ENCODE measurements at regions of chr11 and their contacts with region 1.

Region 1: GRCh38 chr11:62542750-62543567 is 3.6 kb downstream of the AHNAK start:
- DNase-seq: peak; percentile 91 to 94
- ATAC-seq: peak; percentile 77
- H3K4me3 ChIP-seq: peak overlapping the region; percentile 86 to 98
- H3K27ac ChIP-seq: peak overlapping the region in 1 of 2 donors; percentile 46
- H3K4me1 ChIP-seq: peaks cover 0 to 4% of the 10 kb centered on the region in 2 donors
- H3K27me3 ChIP-seq: no peaks in the 10 kb centered on the region

Region 2: GRCh38 chr11:62394825-62395538 is 148.0 kb before region 1 on chr11:
- intact Hi-C with region 1: loop called in 1 of 2 experiments (anchors 2 kb)
- DNase-seq: peak; percentile 91 to 93
- ATAC-seq: peak; percentile 86
- H3K4me3 ChIP-seq: no peak overlapping the region
- H3K27ac ChIP-seq: peak overlapping the region in 1 of 2 donors; percentile 60
- H3K4me1 ChIP-seq: peaks cover 0 to 5% of the 10 kb centered on the region in 2 donors
- H3K27me3 ChIP-seq: no peaks in the 10 kb centered on the region

Region 3: DNA sequence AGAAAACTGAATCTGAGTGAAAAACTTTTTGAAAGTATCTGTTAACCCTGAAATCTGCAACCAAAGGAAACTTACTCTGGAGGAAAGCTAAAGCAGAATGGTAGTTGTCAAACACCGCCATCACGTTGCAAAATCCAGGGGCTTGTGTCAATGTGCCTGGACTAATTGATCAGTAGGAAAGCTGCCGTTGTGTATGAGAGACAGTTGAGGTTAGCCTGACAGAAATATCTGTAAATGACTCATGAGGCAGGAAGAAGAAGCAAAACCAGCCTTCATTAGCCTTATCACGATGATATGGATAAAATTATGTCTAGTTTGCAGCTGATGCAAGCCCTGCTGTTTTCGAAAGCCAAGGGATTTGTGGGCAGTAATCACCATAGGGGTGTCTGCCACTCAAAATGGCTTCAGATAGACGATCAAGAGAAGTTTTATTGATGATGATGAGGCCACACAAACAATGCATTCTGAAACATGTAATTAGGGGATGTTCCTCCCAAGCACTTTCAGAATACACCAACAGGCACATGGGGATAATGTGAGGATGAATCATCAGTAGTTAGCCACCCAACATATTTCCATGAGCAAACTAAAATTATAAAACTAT is 115.2 kb before region 1 on chr11:
- intact Hi-C with region 1: loop called (anchors 1 to 2 kb)
- DNase-seq: no peak
- ATAC-seq: no peak
- H3K4me3 ChIP-seq: no peak overlapping the region
- H3K27ac ChIP-seq: no peak overlapping the region
- H3K4me1 ChIP-seq: no peaks in the 10 kb centered on the region
- H3K27me3 ChIP-seq: no peaks in the 10 kb centered on the region

Region 4: GRCh38 chr11:62444236-62444833 is 98.6 kb before region 1 on chr11:
- intact Hi-C with region 1: loop called in 1 of 2 experiments (anchors 5 kb)
- DNase-seq: peak; percentile 87 to 92
- ATAC-seq: peak; percentile 72
- H3K4me3 ChIP-seq: peak overlapping the region; percentile 1 to 22
- H3K27ac ChIP-seq: peak overlapping the region; percentile 65 to 76
- H3K4me1 ChIP-seq: no peaks in the 10 kb centered on the region
- H3K27me3 ChIP-seq: no peaks in the 10 kb centered on the region

Region 5: DNA sequence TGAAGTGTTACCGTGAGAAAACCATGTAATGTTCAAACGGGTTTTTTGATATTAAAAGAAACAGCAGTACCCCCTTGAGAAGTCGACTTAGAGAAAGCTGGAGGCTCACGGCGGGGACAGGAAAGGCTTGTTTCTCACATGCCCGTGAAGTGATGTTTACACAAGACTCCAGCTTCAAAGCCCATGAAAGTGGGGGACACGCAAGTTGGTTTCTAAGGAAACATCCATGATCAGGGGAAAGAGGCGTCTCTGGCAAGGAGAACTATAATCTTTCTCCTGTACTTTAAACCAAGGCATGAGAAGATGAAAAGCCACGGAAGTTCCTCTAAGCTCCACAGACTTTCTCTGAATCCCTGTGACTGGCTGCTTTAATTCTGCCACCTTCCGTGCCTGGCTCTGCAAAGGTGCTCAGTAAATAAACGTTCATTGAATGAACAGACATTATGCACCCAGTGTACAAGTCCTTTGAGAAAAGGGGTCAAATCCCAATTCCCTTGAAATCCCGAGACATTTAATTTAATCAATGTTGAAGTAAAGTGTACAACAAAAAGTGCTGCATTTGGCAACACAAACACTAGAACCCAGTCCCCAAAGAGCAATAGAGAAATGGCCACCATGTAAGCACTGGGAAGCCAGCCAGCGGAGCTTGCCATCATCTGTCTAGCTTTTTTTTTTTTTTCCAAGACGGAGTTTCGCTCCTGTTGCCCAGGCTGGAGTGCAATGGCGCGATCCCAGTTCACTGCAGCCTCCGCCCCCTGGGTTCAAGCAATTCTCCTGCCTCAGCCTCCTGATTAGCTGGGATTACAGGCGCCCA is 55.0 kb before region 1 on chr11:
- intact Hi-C with region 1: no loop called
- DNase-seq: no peak
- ATAC-seq: no peak
- H3K4me3 ChIP-seq: no peak overlapping the region
- H3K27ac ChIP-seq: no peak overlapping the region
- H3K4me1 ChIP-seq: no peaks in the 10 kb centered on the region
- H3K27me3 ChIP-seq: no peaks in the 10 kb centered on the region

Region 6: DNA sequence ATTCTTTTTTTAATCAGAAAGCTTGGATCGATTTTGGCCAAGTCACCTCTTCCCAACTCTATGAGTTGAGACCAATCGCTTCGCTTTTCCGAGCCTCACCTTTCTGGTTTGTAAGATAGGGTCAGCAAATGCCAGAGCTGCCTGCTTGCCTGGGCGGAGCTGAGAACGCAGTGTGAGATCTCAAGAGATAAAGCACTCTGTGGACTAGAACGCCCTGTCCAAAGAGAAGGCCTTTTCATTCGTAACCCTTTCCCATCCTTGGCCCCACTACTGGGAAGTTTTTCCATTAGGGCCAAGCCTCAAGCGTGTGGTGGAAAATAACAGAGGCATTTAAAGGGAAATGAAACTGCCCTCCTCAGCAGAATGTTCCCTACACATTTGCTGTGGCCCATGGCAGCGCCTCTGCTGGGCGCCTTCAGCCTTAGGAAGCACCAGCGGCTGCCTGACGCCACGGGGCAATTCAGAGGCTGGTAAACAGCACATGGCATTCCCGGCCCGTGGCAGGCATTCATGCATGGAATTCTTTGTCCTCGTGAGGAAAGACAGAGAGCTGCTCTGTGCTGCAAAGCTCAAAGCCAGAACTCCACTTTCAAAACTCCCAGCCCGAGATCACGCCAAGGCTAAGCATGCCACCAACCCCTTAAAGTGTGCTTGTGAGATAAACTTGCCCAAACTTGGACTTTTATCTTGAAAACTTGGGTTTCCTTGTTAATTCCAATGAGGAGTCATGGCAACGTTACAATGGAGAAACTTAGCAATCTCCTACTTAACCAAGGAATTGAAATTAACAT is 34.5 kb before region 1 on chr11:
- intact Hi-C with region 1: loop called (anchors 5 kb)
- DNase-seq: peak; percentile 89 to 91
- ATAC-seq: peak; percentile 86
- H3K4me3 ChIP-seq: no peak overlapping the region
- H3K27ac ChIP-seq: peak overlapping the region in 1 of 2 donors; percentile 79
- H3K4me1 ChIP-seq: no peaks in the 10 kb centered on the region
- H3K27me3 ChIP-seq: no peaks in the 10 kb centered on the region

Region 7: GRCh38 chr11:62556108-62556871 is 13.3 kb after region 1 on chr11:
- intact Hi-C with region 1: loop called in 1 of 2 experiments (anchors 2 kb)
- DNase-seq: peak; percentile 95 to 96
- ATAC-seq: peak; percentile 81
- H3K4me3 ChIP-seq: no peak overlapping the region
- H3K27ac ChIP-seq: peak overlapping the region; percentile 71 to 83
- H3K4me1 ChIP-seq: peaks cover 2 to 5% of the 10 kb centered on the region in 2 donors
- H3K27me3 ChIP-seq: no peaks in the 10 kb centered on the region

Region 8: DNA sequence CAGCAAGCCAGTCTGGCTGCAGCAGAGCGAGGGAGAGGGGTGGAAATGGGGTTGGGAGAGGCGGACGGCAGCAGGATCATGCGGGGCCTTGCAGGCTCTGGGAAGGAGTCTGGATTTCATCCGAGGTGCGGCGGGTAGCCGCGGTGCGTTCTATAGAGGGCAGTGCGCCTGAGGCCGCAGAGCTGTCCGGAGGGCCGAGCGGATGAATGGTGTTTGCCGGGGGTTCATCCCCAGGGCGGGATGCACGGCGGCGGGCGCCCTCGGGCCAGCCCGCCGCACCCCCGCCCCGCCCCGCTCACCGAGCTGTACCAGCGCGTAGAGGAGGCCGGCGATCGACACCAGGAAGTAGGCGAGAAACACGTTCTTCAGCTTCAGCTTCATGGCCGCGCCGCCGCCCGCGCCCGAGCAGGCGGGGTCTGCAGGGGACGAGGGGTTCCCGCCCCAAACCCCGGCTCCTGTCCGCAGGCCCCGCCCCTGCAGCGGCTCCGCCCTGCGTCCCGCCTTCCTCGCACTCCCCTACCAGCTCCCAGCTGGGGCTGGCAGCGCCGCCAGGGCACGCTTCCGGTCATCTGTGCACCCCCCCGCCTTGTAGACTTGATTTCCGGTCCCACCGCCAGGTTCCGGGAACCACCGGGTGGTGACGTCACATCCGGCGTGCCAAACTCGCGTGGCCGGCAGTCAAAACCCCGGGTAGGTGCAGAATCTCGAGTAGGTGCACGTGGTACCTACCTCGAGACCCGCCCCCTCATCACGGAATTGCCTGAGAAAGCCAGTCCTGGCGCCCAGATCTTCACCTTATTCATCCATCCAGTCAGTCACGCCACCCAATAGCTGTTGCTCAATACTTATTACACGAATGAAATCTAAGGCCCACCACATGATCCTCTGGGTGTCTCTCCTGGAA is 78.9 kb after region 1 on chr11 and contains the start of gene B3GAT3:
- intact Hi-C with region 1: no loop called
- DNase-seq: peak; percentile 99 to 100
- ATAC-seq: peak; percentile 98
- H3K4me3 ChIP-seq: peak within 1 kb of the TSS; percentile 56 to 66
- H3K27ac ChIP-seq: peak within 1 kb of the TSS; percentile 6 to 81
- H3K4me1 ChIP-seq: no peaks in the 10 kb centered on the region
- H3K27me3 ChIP-seq: no peaks in the 10 kb centered on the region
- total RNA-seq, gene B3GAT3: 26.7 to 39.7 TPM

Measured in aorta (tissue), 5 donors.